HEK293 (cell line): ENCODE measurements at regions of chr20 and their contacts with region 1.

Region 1: GRCh38 chr20:46694494-46694893 is 5.2 kb upstream of the TP53RK start:
- H3K4me3 ChIP-seq: no peak overlapping the region
- H3K27ac ChIP-seq: no peak overlapping the region
- H3K4me1 ChIP-seq: no peaks in the 10 kb centered on the region
- CTCF ChIP-seq: no peak

Region 2: GRCh38 chr20:46666818-46667515 is 27.5 kb before region 1 on chr20:
- CTCF ChIA-PET with region 1: no interaction called
- POLR2A ChIA-PET with region 1: no interaction called
- H3K4me3 ChIP-seq: no peak overlapping the region
- H3K27ac ChIP-seq: no peak overlapping the region
- H3K4me1 ChIP-seq: no peaks in the 10 kb centered on the region
- CTCF ChIP-seq: no peak

Region 3: GRCh38 chr20:46708172-46708860 is 13.8 kb after region 1 on chr20:
- CTCF ChIA-PET with region 1: interaction called, 10 read pairs
- POLR2A ChIA-PET with region 1: no interaction called
- H3K4me3 ChIP-seq: no peak overlapping the region
- H3K27ac ChIP-seq: no peak overlapping the region
- H3K4me1 ChIP-seq: no peaks in the 10 kb centered on the region
- CTCF ChIP-seq: no peak

Region 4: GRCh38 chr20:46939031-46939965 is 244.8 kb after region 1 on chr20:
- CTCF ChIA-PET with region 1: no interaction called
- POLR2A ChIA-PET with region 1: no interaction called
- H3K4me3 ChIP-seq: no peak overlapping the region
- H3K27ac ChIP-seq: no peak overlapping the region
- H3K4me1 ChIP-seq: no peaks in the 10 kb centered on the region
- CTCF ChIP-seq: no peak